ENCODE measurements at regions of chr4 and their contacts with region 1.

Region 1: DNA sequence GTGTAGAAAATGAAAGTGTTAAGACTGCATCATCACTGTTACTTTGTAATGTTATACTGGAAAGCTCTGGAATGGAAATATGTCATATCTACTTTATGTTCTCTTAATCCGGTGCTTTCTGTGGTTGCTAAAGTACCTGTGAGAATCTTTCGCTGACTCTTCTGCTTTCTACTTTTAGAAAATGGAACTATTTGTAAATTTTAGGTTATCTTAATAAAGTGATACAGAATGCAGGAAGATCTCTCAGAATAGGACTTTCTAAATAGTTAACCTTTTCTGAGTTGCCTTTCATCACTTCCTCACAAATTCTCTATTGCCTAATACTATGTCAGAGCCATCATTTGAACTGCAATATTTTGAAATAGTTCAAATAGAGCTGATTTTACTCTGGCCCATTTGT is 69.3 kb downstream of the BMP2K start:
- DNase-seq: no peak
- ATAC-seq: no peak

Region 2: GRCh38 chr4:78799551-78800495 is 45.6 kb before region 1 on chr4:
- intact Hi-C with region 1: loop called (anchors 10 kb)
- DNase-seq: no peak
- ATAC-seq: no peak

Region 3: GRCh38 chr4:79030973-79031372 is 185.5 kb after region 1 on chr4:
- intact Hi-C with region 1: no loop called
- DNase-seq: no peak
- ATAC-seq: no peak

Region 4: DNA sequence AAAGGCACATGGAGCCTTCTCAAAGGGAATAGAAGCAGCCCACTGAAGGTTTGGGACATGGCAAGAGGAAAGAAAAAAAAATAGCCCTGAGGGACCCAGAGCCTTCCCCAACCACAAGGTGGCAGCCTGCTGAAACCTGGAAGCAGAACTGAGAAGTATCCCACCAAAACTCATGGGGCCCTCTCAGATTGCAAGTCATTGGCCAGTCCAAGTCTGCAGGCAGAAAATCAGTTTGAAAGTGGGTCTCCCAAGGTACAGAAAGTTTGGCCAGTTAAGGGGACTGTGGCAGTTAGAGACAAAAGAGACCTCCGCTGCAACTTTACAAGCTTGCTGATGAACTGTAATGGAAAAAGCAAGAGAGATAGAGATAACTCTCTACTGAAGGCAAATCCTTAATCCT is 1071.8 kb after region 1 on chr4:
- intact Hi-C with region 1: no loop called
- DNase-seq: peak; percentile 40
- ATAC-seq: no peak